ENCODE measurements at regions of chr1 and their contacts with region 1.

Region 1: GRCh38 chr1:87328272-87329050 is at the start of gene LMO4:
- DNase-seq: peak; percentile 91
- H3K4me3 Mint-ChIP-seq: peak within 1 kb of the TSS; percentile 91
- H3K27ac Mint-ChIP-seq: peak within 1 kb of the TSS; percentile 81
- H3K4me1 Mint-ChIP-seq: peaks cover 33% of the 10 kb centered on the region
- H3K27me3 Mint-ChIP-seq: peaks cover 24% of the 10 kb centered on the region
- total RNA-seq, gene LMO4: 15.5 to 19.5 TPM

Region 2: DNA sequence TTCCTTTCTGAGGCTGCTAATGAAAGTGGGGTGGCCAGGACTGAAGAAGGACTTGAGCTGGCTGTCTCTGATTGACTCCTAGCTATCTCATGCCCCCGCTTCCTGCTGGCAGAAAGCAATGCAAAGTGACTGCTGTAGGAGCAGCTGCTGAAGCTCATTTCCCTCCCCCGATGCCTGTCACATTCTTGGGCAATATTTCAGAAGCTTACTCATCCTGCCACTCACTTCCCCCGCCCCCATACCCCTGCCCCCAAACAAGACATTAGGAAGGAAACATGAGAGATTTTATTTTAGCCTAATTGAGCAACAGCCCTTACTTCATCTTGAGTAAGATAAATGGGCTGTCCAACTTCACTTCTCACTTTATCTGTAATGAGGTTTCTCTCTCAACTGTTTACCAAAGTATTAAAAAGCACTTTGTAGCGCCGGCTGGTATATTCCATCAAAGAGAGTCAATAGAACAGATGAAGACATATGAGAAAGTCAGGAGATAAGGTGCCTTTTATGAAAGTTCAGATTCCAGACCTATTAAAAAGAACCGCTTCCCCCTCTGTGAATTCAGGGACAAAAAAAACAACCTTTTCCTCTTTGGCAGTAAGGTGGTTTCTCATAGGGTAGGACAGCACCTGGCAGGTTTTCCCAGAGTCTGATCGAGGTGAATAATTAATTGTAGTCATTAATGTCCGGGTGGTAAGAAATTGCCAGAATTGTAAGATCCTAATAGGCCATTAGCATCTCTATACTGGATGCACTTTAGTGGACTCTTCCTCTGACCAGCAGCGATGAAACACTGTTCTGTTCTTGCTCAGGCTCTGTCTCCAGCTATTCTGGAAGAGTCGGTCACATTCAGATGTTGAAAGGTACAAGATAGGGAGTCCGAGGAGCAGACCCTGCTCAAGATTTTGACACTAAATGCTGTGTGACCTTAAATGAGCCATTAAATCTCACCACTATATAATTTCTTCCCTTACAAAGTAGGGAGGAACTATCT is 553.9 kb before region 1 on chr1:
- CTCF ChIA-PET with region 1: no interaction called
- intact Hi-C with region 1: loop called (anchors 5 kb)
- DNase-seq: peak; percentile 81
- H3K4me3 Mint-ChIP-seq: no peak overlapping the region
- H3K27ac Mint-ChIP-seq: peak overlapping the region; percentile 17
- H3K4me1 Mint-ChIP-seq: peaks cover 15% of the 10 kb centered on the region
- H3K27me3 Mint-ChIP-seq: no peaks in the 10 kb centered on the region

Region 3: GRCh38 chr1:87131809-87132283 is 196.6 kb before region 1 on chr1:
- CTCF ChIA-PET with region 1: no interaction called
- intact Hi-C with region 1: loop called (anchors 5 kb)
- DNase-seq: peak; percentile 81
- H3K4me3 Mint-ChIP-seq: peak overlapping the region; percentile 69
- H3K27ac Mint-ChIP-seq: no peak overlapping the region
- H3K4me1 Mint-ChIP-seq: peaks cover 7% of the 10 kb centered on the region
- H3K27me3 Mint-ChIP-seq: peaks cover 40% of the 10 kb centered on the region

Region 4: GRCh38 chr1:87450615-87451207 is 122.2 kb after region 1 on chr1:
- CTCF ChIA-PET with region 1: interaction called, 4 read pairs
- intact Hi-C with region 1: loop called (anchors 1 kb)
- DNase-seq: peak; percentile 33
- H3K4me3 Mint-ChIP-seq: no peak overlapping the region
- H3K27ac Mint-ChIP-seq: no peak overlapping the region
- H3K4me1 Mint-ChIP-seq: peaks cover 5% of the 10 kb centered on the region
- H3K27me3 Mint-ChIP-seq: no peaks in the 10 kb centered on the region

Region 5: DNA sequence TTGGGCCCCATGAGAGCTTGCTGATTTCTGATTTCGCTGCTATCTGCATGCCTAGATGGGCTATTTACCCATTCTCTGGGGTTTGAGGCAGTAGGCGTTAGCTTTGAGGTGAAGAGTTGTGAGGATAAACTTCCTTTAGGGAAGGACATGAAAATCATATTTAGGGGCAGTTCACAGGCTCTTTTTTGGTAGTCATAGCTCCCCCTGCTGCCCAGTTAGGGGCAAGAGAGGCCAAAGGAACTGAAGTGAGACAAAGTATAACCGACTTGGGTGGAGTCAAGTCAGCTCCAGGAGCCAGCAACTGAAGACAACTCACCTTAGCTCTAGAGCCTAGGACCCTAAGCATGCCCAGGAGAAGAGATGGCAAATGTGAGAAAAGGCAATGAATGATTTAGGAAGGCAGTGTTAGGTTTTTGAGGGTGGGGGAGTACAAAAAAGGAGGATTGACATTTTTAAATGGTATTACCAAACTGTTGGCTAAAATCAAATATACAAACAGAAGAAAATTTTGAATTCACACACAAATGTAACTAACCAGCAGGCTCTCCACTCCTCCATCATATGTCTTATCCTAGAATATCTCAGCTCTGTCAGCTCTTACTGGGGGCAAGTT is 625.4 kb after region 1 on chr1:
- CTCF ChIA-PET with region 1: no interaction called
- intact Hi-C with region 1: loop called (anchors 1 kb)
- DNase-seq: peak; percentile 62
- H3K4me3 Mint-ChIP-seq: no peak overlapping the region
- H3K27ac Mint-ChIP-seq: no peak overlapping the region
- H3K4me1 Mint-ChIP-seq: no peaks in the 10 kb centered on the region
- H3K27me3 Mint-ChIP-seq: peaks cover 20% of the 10 kb centered on the region

Region 6: GRCh38 chr1:88661951-88662699 is 1333.7 kb after region 1 on chr1:
- CTCF ChIA-PET with region 1: no interaction called
- intact Hi-C with region 1: loop called (anchors 5 kb)
- DNase-seq: no peak
- H3K4me3 Mint-ChIP-seq: no peak overlapping the region
- H3K27ac Mint-ChIP-seq: no peak overlapping the region
- H3K4me1 Mint-ChIP-seq: peaks cover 28% of the 10 kb centered on the region
- H3K27me3 Mint-ChIP-seq: no peaks in the 10 kb centered on the region

Region 7: GRCh38 chr1:88678405-88678804 is 1349.9 kb after region 1 on chr1:
- CTCF ChIA-PET with region 1: no interaction called
- intact Hi-C with region 1: no loop called
- DNase-seq: no peak
- H3K4me3 Mint-ChIP-seq: no peak overlapping the region
- H3K27ac Mint-ChIP-seq: no peak overlapping the region
- H3K4me1 Mint-ChIP-seq: peaks cover 13% of the 10 kb centered on the region
- H3K27me3 Mint-ChIP-seq: no peaks in the 10 kb centered on the region

Measured in activated naive CD4-positive, alpha-beta T cell treated with anti-CD3 and anti-CD28 coated beads for 36 hours (primary cell).